ENCODE measurements at regions of chr5 and their contacts with region 1.

Region 1: DNA sequence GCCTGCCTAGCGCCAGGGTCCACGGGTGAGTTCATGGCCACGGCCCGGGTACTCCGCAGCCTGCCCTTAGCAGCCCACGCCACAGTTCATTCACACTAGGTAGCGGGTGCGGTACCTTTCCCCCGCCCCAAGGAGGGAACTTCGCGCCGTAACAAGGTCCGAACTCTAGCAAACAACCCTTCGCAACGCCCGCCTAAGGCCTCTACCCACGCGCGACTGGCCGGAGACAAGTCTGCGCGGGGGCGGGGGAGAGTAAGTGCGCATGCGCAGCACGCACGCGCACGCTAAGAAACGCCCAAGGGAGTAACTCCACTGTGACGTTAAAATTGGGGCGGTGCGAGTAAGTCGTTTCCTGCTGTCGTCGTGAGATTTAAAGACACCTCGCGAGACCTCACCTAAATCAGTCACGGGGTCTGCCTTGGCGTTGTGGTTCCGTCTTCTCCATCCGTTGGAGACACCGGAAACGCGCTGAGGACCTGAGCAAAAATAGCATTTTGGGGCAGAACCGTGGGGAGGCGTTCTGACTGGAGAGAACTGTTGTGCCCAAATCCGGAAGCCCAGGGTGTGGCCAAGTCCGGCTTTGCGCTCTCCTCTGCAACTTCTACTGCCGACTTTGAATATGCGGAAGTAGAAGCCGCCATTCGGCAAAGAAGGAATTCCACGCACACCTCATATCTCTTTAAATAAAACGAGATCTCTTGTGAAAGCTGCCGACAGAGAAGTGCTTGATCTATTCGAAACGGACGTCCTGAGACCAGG is at the start of gene RAPGEF6:
- DNase-seq: peak; percentile 100
- H3K4me3 Mint-ChIP-seq: peak within 1 kb of the TSS; percentile 94
- H3K27ac Mint-ChIP-seq: peak within 1 kb of the TSS; percentile 98
- H3K4me1 Mint-ChIP-seq: peaks cover 26% of the 10 kb centered on the region
- H3K27me3 Mint-ChIP-seq: no peaks in the 10 kb centered on the region
- total RNA-seq, gene RAPGEF6: 34.5 to 37.3 TPM

Region 2: GRCh38 chr5:131382407-131383395 is 252.5 kb before region 1 on chr5:
- CTCF ChIA-PET with region 1: no interaction called
- intact Hi-C with region 1: loop called (anchors 5 kb)
- DNase-seq: peak; percentile 61
- H3K4me3 Mint-ChIP-seq: peak overlapping the region; percentile 57
- H3K27ac Mint-ChIP-seq: peak overlapping the region; percentile 96
- H3K4me1 Mint-ChIP-seq: peaks cover 93% of the 10 kb centered on the region
- H3K27me3 Mint-ChIP-seq: no peaks in the 10 kb centered on the region

Region 3: GRCh38 chr5:131589510-131590348 is 45.4 kb before region 1 on chr5:
- CTCF ChIA-PET with region 1: interaction called, 32 read pairs
- intact Hi-C with region 1: loop called (anchors 1 kb)
- DNase-seq: no peak
- H3K4me3 Mint-ChIP-seq: no peak overlapping the region
- H3K27ac Mint-ChIP-seq: peak overlapping the region; percentile 58
- H3K4me1 Mint-ChIP-seq: peaks cover 42% of the 10 kb centered on the region
- H3K27me3 Mint-ChIP-seq: no peaks in the 10 kb centered on the region

Region 4: DNA sequence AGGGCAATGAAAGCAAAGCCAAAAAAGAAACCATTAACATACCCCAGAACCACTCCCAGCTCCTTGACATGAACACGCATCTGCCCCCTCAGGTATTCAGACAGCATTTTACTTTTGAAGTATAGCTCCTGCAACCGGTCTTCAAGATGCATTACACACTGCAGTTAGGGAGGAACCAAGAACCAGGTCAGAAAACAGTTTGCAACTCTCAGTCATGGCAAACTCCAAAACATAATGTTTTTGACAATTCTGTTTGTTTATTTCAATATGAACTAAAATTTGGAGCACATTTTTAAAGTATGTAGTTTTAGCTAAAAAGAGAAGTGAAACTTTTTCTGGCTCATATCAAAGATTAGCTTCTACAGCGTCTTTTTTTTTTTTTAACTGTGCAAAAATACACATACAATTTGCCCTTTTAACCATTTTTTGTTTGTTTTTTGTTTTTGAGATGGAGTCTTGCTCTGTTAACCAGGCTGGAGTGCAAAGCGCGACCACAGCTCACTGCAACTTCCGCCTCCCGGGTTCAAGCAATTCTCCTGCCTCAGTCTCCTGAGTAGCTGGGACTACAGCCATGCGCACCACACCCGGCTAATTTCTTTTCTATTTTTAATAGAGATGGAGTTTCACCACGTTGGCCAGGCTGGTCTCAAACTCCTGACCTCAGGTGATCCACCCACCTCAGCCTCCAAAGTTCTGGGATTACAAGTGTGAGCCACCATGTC is 12.0 kb after region 1 on chr5:
- CTCF ChIA-PET with region 1: no interaction called
- intact Hi-C with region 1: no loop called
- DNase-seq: no peak
- H3K4me3 Mint-ChIP-seq: no peak overlapping the region
- H3K27ac Mint-ChIP-seq: no peak overlapping the region
- H3K4me1 Mint-ChIP-seq: no peaks in the 10 kb centered on the region
- H3K27me3 Mint-ChIP-seq: no peaks in the 10 kb centered on the region

Region 5: GRCh38 chr5:131747180-131748105 is 112.3 kb after region 1 on chr5:
- CTCF ChIA-PET with region 1: no interaction called
- intact Hi-C with region 1: loop called (anchors 1 kb)
- DNase-seq: no peak
- H3K4me3 Mint-ChIP-seq: peak overlapping the region; percentile 49
- H3K27ac Mint-ChIP-seq: peak overlapping the region; percentile 85
- H3K4me1 Mint-ChIP-seq: peaks cover 37% of the 10 kb centered on the region
- H3K27me3 Mint-ChIP-seq: no peaks in the 10 kb centered on the region

Region 6: GRCh38 chr5:132019857-132020555 is 384.8 kb after region 1 on chr5:
- CTCF ChIA-PET with region 1: no interaction called
- intact Hi-C with region 1: loop called (anchors 1 kb)
- DNase-seq: peak; percentile 93
- H3K4me3 Mint-ChIP-seq: peak overlapping the region; percentile 37
- H3K27ac Mint-ChIP-seq: peak overlapping the region; percentile 92
- H3K4me1 Mint-ChIP-seq: peaks cover 28% of the 10 kb centered on the region
- H3K27me3 Mint-ChIP-seq: peaks cover 28% of the 10 kb centered on the region

Region 7: GRCh38 chr5:132259069-132259851 is 624.1 kb after region 1 on chr5:
- CTCF ChIA-PET with region 1: no interaction called
- intact Hi-C with region 1: no loop called
- DNase-seq: peak; percentile 2
- H3K4me3 Mint-ChIP-seq: no peak overlapping the region
- H3K27ac Mint-ChIP-seq: no peak overlapping the region
- H3K4me1 Mint-ChIP-seq: peaks cover 14% of the 10 kb centered on the region
- H3K27me3 Mint-ChIP-seq: peaks cover 12% of the 10 kb centered on the region

Region 8: GRCh38 chr5:132490486-132491367 is 855.6 kb after region 1 on chr5 and contains the start of gene IRF1:
- CTCF ChIA-PET with region 1: no interaction called
- intact Hi-C with region 1: loop called (anchors 1 kb)
- DNase-seq: peak; percentile 98
- H3K4me3 Mint-ChIP-seq: peak within 1 kb of the TSS; percentile 91
- H3K27ac Mint-ChIP-seq: peak within 1 kb of the TSS; percentile 97
- H3K4me1 Mint-ChIP-seq: peaks cover 64% of the 10 kb centered on the region
- H3K27me3 Mint-ChIP-seq: no peaks in the 10 kb centered on the region
- total RNA-seq, gene IRF1: 84.3 to 88.4 TPM